SK-N-SH (cell line): ENCODE measurements at regions of chr12 and their contacts with region 1.

Region 1: DNA sequence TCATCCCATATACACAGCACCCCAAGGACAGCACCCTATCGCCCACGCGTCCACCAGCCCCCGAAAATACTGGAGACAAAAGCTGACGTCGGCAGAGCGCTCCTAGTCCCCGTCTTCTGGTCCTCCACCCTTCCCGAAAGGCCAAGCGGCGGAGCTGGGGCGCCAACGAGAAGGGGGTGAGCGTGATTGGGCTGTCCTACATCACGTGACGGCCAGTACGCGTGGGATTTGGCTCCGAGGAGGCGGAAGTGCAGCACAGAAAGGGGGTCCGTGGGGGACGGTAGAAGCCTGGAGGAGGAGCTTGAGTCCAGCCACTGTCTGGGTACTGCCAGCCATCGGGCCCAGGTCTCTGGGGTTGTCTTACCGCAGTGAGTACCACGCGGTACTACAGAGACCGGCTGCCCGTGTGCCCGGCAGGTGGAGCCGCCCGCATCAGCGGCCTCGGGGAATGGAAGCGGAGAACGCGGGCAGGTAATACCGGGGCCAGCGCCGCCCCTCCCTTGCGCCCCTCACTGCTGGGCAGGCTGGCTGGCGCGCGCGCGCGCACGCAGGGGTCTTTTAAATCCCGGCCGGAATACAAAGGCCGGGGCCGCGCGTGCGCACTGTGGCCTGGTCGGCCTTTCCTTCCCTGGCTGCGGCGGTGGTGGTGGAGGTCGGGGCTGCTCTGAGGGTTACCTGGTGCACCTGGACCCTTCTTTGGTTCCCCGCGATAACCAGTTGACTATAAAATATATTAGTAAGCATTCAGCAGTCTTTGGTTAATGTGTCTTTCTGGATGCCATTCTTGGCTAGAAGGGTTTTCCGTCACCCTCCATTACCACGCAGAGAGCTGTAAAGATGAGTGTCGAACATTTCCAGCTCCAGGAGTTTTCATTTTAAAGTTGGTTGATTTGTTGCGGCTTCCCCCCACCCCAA is at the start of gene TDG:
- DNase-seq: peak; percentile 94
- H3K4me3 ChIP-seq: peak within 1 kb of the TSS; percentile 67 to 97
- H3K27ac ChIP-seq: peak within 1 kb of the TSS; percentile 91 to 92
- H3K4me1 ChIP-seq: peaks cover 6 to 22% of the 10 kb centered on the region in 2 experiments
- H3K27me3 ChIP-seq: no peaks in the 10 kb centered on the region
- CTCF ChIP-seq: peak; percentile 34
- EP300 ChIP-seq: no peak; a peak in 1 of 4 replicates
- RAD21 ChIP-seq: no peak
- polyA plus RNA-seq, gene TDG: 11.3 and 17.9 TPM in 2 replicates

Region 2: GRCh38 chr12:103930034-103930786 is 35.6 kb before region 1 on chr12 and contains the start of gene HSP90B1:
- CTCF ChIA-PET with region 1: no interaction called
- POLR2A ChIA-PET with region 1: interaction called, 31 read pairs
- DNase-seq: peak; percentile 97
- H3K4me3 ChIP-seq: peak within 1 kb of the TSS; percentile 95
- H3K27ac ChIP-seq: peak within 1 kb of the TSS; percentile 86 to 91
- H3K4me1 ChIP-seq: peaks cover 15 to 22% of the 10 kb centered on the region in 2 experiments
- H3K27me3 ChIP-seq: no peaks in the 10 kb centered on the region
- CTCF ChIP-seq: no peak
- EP300 ChIP-seq: peak in 1 of 2 experiments; percentile 8; a peak in 1 of 4 replicates
- RAD21 ChIP-seq: no peak
- polyA plus RNA-seq, gene HSP90B1: 420 and 482 TPM in 2 replicates

Region 3: DNA sequence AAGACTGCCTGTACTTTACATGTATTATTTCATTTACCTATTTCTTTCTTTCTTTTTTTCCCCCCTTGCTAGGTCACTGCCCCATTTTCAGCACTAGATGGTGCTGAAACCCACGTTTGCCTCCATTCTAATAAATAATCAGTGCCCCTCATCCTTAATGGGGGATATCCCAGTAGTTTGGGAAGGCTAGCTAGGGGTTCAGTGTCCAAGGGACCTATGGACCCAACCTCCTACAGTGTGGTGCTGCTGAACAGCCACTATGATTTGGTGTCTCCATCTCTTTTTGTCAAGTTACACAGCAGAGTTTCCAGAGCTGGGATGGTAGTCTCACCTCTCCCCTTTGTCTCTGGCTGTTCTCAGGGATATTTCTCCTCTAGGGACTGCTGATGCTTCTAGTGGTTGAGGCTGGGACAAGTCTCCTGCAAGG is 91.9 kb after region 1 on chr12:
- CTCF ChIA-PET with region 1: no interaction called
- POLR2A ChIA-PET with region 1: interaction called, 27 read pairs
- DNase-seq: peak; percentile 40
- H3K4me3 ChIP-seq: no peak overlapping the region
- H3K27ac ChIP-seq: no peak overlapping the region
- H3K4me1 ChIP-seq: peaks cover 0 to 24% of the 10 kb centered on the region in 2 experiments; a peak in 2 of 4 replicates
- H3K27me3 ChIP-seq: no peaks in the 10 kb centered on the region
- CTCF ChIP-seq: peak; percentile 72
- EP300 ChIP-seq: no peak
- RAD21 ChIP-seq: peak; percentile 70

Region 4: DNA sequence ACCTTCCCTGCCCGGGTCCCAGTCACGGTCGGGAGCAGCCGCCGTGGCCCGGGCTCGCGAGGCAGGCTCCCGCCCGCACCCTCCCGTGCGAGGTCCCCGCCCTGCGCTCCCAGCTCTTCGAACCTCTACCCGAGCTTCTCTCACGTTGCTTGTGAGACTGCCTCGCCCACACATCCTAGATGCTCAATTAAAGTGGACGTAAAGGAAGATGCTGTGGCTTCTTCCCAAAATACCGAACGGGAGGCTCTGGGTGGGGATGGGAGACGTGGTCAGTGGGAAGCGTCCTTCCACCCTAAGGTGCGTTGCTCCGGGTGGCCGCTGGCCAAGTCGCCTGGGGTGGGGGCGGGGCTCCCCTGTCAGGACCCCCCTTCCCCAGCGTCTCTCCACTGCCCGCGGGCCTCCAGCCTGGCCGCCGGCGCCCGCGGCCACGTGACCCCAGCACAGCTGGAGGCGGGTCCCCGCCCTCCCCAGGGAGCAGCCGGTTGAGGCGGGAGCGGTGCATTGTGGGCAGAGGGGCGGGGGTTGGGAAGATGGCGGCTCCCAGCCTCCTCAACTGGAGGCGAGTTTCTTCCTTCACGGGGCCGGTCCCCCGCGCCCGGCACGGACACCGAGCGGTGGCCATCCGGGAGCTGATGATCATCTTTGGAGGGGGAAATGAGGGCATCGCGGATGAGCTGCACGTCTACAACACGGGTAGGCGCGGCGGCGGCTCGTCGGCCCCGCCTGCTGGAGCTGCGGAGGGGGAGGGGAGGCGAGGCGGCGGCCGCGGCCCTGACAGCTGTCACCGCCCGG is 98.4 kb after region 1 on chr12 and contains the start of gene HCFC2:
- CTCF ChIA-PET with region 1: no interaction called
- POLR2A ChIA-PET with region 1: interaction called, 27 read pairs
- DNase-seq: peak; percentile 99
- H3K4me3 ChIP-seq: peak within 1 kb of the TSS; percentile 94 to 98
- H3K27ac ChIP-seq: peak within 1 kb of the TSS; percentile 77 to 89
- H3K4me1 ChIP-seq: peaks cover 6 to 13% of the 10 kb centered on the region in 2 experiments; a peak in 3 of 4 replicates
- H3K27me3 ChIP-seq: no peaks in the 10 kb centered on the region
- CTCF ChIP-seq: no peak
- EP300 ChIP-seq: peak; percentile 8 to 34; a peak in 2 of 4 replicates
- RAD21 ChIP-seq: no peak
- polyA plus RNA-seq, gene HCFC2: 5.2 and 6.6 TPM in 2 replicates

Region 5: GRCh38 chr12:104137913-104138796 is 172.3 kb after region 1 on chr12 and contains the start of gene NFYB:
- CTCF ChIA-PET with region 1: no interaction called
- POLR2A ChIA-PET with region 1: interaction called, 22 read pairs
- DNase-seq: peak; percentile 96
- H3K4me3 ChIP-seq: peak within 1 kb of the TSS; percentile 78 to 84
- H3K27ac ChIP-seq: peak within 1 kb of the TSS; percentile 73 to 93
- H3K4me1 ChIP-seq: peaks cover 21 to 39% of the 10 kb centered on the region in 2 experiments
- H3K27me3 ChIP-seq: no peaks in the 10 kb centered on the region
- CTCF ChIP-seq: no peak
- EP300 ChIP-seq: peak; percentile 99 to 100
- RAD21 ChIP-seq: no peak
- polyA plus RNA-seq, gene NFYB: 11.0 and 16.7 TPM in 2 replicates